Ovary (tissue), 10 donors: ENCODE measurements at regions of chr6 and their contacts with region 1.

Region 1: GRCh38 chr6:122491919-122492555 is 20.4 kb upstream of the SERINC1 start:
- DNase-seq: peak; percentile 45 to 71 (median 65)
- H3K4me3 ChIP-seq: no peak overlapping the region
- H3K27ac ChIP-seq: no peak overlapping the region
- H3K4me1 ChIP-seq: no peaks in the 10 kb centered on the region
- H3K27me3 ChIP-seq: no peaks in the 10 kb centered on the region
- CTCF ChIP-seq: peak in 2 of 3 donors; percentile 27 to 43
- EP300 ChIP-seq: no peak
- POLR2A ChIP-seq: no peak

Region 2: GRCh38 chr6:120876424-120876823 is 1615.6 kb before region 1 on chr6:
- intact Hi-C with region 1: loop called in 1 of 4 experiments (anchors 10 kb)
- DNase-seq: no peak
- H3K4me3 ChIP-seq: no peak overlapping the region
- H3K27ac ChIP-seq: no peak overlapping the region
- H3K4me1 ChIP-seq: no peaks in the 10 kb centered on the region
- H3K27me3 ChIP-seq: no peaks in the 10 kb centered on the region
- CTCF ChIP-seq: no peak
- EP300 ChIP-seq: no peak
- POLR2A ChIP-seq: no peak

Region 3: DNA sequence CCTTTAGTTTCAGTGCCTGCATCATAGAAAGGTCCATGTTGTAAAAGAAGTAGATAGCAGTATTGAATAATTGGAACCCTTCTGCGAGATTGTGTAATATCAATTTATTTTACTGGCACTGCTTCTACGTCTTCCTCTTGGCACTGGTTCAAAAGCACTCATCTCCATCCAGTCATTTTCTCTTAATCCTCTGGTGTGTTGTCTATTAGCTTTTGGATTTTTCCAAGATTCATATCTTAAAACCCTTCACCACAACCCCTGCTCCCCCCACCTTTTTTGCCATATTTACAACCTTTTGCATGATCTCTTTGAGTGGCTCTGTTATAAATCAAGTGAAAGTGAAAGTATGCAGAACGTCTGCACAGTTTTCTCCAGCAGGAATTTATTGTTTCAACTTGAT is 169.2 kb before region 1 on chr6:
- intact Hi-C with region 1: no loop called
- DNase-seq: no peak
- H3K4me3 ChIP-seq: no peak overlapping the region
- H3K27ac ChIP-seq: no peak overlapping the region
- H3K4me1 ChIP-seq: no peaks in the 10 kb centered on the region
- H3K27me3 ChIP-seq: no peaks in the 10 kb centered on the region
- CTCF ChIP-seq: no peak
- EP300 ChIP-seq: no peak
- POLR2A ChIP-seq: no peak

Region 4: GRCh38 chr6:122381497-122382265 is 110.4 kb before region 1 on chr6:
- intact Hi-C with region 1: loop called in 1 of 4 experiments (anchors 10 kb)
- DNase-seq: peak; percentile 27 to 69 (median 47)
- H3K4me3 ChIP-seq: no peak overlapping the region
- H3K27ac ChIP-seq: no peak overlapping the region
- H3K4me1 ChIP-seq: no peaks in the 10 kb centered on the region
- H3K27me3 ChIP-seq: no peaks in the 10 kb centered on the region
- CTCF ChIP-seq: peak; percentile 41 to 70 (median 58)
- EP300 ChIP-seq: no peak
- POLR2A ChIP-seq: no peak